Heart left ventricle (tissue), 16 donors: ENCODE measurements at regions of chr6 and their contacts with region 1.

Region 1: DNA sequence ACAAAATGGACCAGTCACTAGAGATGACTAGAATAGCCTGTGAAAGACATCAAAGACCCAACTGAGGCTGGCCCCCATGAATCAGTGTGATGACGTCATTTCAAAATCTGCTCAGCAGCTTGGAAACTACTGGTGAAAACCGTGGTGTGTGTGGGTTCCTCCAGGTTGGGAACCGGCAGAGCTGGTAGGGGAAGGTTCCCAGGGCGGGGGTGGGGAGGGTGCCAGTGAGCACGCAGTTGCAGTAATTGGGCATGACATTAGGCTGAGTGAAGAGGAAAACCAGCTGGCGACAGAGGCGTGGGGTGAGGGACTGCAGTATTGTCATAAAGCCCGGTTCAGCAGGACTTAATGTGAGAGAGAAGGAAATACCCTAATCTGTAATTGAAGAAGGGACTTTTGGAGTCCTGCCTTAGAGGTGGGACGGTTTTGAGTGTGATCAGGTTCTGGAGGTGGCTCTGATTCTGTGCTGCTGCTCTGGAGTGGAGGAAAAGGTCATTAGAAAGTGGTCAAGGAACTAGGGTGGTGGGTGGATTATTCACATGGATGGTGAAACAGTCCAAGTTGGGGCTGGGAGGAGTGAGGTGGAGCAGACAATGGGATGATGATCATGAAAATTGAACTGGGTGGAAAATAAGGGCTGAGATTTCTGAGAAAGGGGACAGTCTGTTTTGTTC is 52.0 kb upstream of the MTHFD1L start:
- DNase-seq: no peak
- ATAC-seq: peak; percentile 11 to 48 (median 32)
- H3K4me3 ChIP-seq: no peak overlapping the region
- H3K27ac ChIP-seq: peak overlapping the region; percentile 4 to 75 (median 60)
- H3K4me1 ChIP-seq: peaks cover 0 to 25% (median 6%) of the 10 kb centered on the region in 12 donors
- H3K27me3 ChIP-seq: no peaks in the 10 kb centered on the region
- CTCF ChIP-seq: no peak
- POLR2A ChIP-seq: no peak

Region 2: DNA sequence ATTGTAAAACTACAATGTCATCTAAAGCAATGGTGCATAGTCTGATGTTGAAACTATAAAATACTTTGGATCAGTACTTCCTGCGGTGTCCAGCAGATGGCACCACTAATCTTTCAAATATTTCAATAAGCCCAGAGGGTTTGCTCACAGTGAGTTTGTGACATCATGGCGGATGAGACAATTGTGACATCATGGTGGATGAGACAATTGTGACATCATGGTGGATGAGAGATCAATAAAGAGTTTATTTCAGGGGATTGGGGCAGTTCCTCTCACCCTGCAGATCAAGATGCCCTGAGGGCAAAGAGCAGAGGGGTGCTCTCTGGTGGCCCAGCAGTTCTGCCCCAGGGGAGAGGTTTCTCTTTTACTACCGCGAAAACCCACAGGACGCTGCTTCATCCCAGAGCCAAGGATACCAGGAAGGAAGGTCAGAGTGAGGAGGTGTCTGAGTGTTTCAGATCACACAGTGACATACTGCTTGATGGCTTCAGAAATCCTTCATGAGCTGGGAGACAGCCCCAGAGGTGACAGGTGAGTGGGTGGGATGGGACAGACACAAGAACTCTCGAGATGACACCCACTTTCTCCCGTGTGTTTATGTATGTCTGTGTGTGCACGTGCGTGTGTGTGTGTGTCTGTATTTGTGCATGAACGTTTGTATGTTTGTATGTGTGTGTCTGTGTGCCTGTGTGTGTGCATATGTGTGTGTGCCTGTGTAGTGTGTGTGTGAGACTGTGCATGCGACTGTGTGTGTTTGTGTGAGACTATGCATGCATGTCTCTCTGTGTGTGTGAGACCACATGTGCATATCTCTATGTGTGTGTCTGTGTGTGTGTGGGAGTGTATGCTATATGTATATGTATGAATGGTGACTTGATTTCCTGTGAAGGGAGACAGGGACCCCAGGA is 879.0 kb before region 1 on chr6:
- intact Hi-C with region 1: loop called in 2 of 10 experiments (anchors 10 kb)
- DNase-seq: peak in 2 of 5 donors; percentile 34 to 44
- ATAC-seq: peak in 3 of 4 donors; percentile 65 to 77 (median 69)
- H3K4me3 ChIP-seq: no peak overlapping the region
- H3K27ac ChIP-seq: no peak overlapping the region
- H3K4me1 ChIP-seq: peaks cover 0 to 13% (median 10%) of the 10 kb centered on the region in 12 donors
- H3K27me3 ChIP-seq: peaks cover 22 to 96% (median 64%) of the 10 kb centered on the region in 9 donors
- CTCF ChIP-seq: peak; percentile 70 to 86 (median 79)
- POLR2A ChIP-seq: no peak

Region 3: GRCh38 chr6:150072201-150072600 is 741.3 kb before region 1 on chr6:
- intact Hi-C with region 1: loop called in 1 of 10 experiments (anchors 10 kb)
- DNase-seq: peak in 3 of 5 donors; percentile 42 to 71 (median 70)
- ATAC-seq: no peak
- H3K4me3 ChIP-seq: no peak overlapping the region
- H3K27ac ChIP-seq: no peak overlapping the region
- H3K4me1 ChIP-seq: peaks cover 0 to 13% (median 4%) of the 10 kb centered on the region in 12 donors
- H3K27me3 ChIP-seq: no peaks in the 10 kb centered on the region
- CTCF ChIP-seq: no peak
- POLR2A ChIP-seq: no peak

Region 4: DNA sequence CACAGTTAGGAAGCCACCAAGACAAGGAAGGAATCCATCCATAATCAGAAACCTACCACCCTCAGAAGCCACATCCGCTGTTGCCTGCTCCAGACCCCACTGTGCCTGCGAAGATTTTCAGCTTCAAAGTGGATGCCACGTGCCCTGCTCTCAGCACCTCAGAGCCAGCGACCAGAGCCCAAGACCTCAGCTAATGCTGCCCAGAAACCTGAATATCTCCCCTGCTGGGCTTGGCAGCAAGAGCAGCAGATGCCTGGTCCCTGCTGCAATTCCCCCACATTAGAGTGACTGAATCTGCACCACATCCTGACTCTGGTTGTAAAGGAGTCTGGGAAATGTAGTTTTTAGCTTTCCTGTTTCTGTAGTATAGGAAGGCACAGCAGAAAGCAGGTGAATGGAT is 733.9 kb before region 1 on chr6:
- intact Hi-C with region 1: loop called in 7 of 10 experiments (anchors 2 to 10 kb)
- DNase-seq: no peak
- ATAC-seq: no peak
- H3K4me3 ChIP-seq: no peak overlapping the region
- H3K27ac ChIP-seq: no peak overlapping the region
- H3K4me1 ChIP-seq: no peaks in the 10 kb centered on the region
- H3K27me3 ChIP-seq: peaks cover 0 to 10% (median 0%) of the 10 kb centered on the region in 9 donors
- CTCF ChIP-seq: no peak
- POLR2A ChIP-seq: no peak

Region 5: DNA sequence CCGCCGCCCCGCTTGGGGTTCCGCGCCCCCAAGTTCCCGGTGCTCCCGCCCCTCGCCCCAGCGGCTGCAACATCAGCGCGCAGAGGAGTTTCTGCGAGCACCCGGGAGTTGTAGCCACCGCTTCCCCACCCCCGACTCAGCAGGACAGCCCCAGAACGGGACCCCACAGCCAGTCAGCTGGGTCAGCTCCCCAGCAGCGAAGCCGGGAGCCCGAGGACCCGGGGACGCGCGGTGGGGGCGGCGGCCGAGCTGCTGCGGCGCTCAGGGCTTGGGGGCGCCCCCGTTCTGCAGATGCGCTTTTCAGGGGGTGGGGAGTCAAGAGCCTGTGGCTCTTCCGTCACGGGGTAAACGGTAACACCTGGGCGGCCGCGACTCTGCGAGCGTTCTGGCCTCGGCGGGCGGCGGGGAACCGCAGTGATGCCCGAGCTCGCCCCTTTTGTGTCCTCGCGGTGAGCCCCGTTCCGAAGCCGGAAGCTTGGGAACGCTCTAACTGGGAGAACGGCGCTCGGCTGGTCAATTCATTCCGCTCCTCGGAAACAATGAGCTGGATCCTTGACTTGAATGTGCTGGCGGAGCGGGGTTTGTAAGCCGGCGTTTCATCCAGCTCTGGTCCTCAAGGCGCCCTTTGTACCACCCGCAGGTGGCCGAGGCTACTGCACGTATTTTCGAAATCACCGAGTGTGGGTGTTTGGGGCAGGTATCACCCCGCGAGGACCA is 213.0 kb before region 1 on chr6:
- intact Hi-C with region 1: loop called in 8 of 10 experiments (anchors 5 to 10 kb)
- DNase-seq: peak; percentile 66 to 75 (median 71)
- ATAC-seq: peak; percentile 48 to 80 (median 76)
- H3K4me3 ChIP-seq: peak overlapping the region; percentile 59 to 91 (median 80)
- H3K27ac ChIP-seq: peak overlapping the region; percentile 78 to 95 (median 89)
- H3K4me1 ChIP-seq: peaks cover 0 to 22% (median 3%) of the 10 kb centered on the region in 12 donors
- H3K27me3 ChIP-seq: peaks cover 0 to 18% (median 2%) of the 10 kb centered on the region in 9 donors
- CTCF ChIP-seq: peak; percentile 20 to 66 (median 45)
- POLR2A ChIP-seq: peak in 1 of 2 donors; percentile 16

Region 6: DNA sequence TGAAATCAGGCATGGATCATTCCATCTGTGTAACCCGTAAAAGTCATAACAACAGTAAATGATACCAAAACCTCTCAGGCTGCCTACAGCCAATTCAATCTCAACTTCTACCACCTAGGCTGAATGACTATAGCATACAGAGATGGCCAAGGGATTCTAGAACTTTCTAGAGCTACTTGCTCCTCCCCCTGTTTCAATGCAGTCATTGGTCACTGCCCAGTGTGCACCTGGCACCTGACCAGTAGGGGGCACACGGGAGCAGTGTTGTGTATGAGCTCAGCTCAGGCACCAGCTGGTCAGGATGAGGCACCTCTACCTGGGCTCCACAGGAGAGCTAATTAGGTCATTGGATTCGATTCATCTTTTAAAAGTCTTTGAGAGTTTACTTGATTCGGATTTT is 127.6 kb before region 1 on chr6:
- intact Hi-C with region 1: loop called in 6 of 10 experiments (anchors 1 to 10 kb)
- DNase-seq: peak in 2 of 5 donors; percentile 29 to 61
- ATAC-seq: no peak
- H3K4me3 ChIP-seq: peak overlapping the region in 3 of 12 donors; percentile 3 to 55 (median 51)
- H3K27ac ChIP-seq: peak overlapping the region in 9 of 12 donors; percentile 50 to 92 (median 86)
- H3K4me1 ChIP-seq: peaks cover 0 to 61% (median 26%) of the 10 kb centered on the region in 12 donors
- H3K27me3 ChIP-seq: no peaks in the 10 kb centered on the region
- CTCF ChIP-seq: peak in 11 of 12 donors; percentile 40 to 66 (median 56)
- POLR2A ChIP-seq: no peak

Region 7: GRCh38 chr6:150876598-150876997 is 63.1 kb after region 1 on chr6:
- intact Hi-C with region 1: loop called in 1 of 10 experiments (anchors 5 kb)
- DNase-seq: peak in 4 of 5 donors; percentile 54 to 82 (median 68)
- ATAC-seq: peak; percentile 86 to 97 (median 96)
- H3K4me3 ChIP-seq: no peak overlapping the region
- H3K27ac ChIP-seq: peak overlapping the region in 5 of 12 donors; percentile 4 to 66 (median 39)
- H3K4me1 ChIP-seq: peaks cover 0 to 17% (median 5%) of the 10 kb centered on the region in 12 donors
- H3K27me3 ChIP-seq: no peaks in the 10 kb centered on the region
- CTCF ChIP-seq: peak in 5 of 12 donors; percentile 24 to 41 (median 39)
- POLR2A ChIP-seq: no peak

Region 8: GRCh38 chr6:150905769-150906506 is 92.5 kb after region 1 on chr6:
- intact Hi-C with region 1: no loop called
- DNase-seq: no peak
- ATAC-seq: no peak
- H3K4me3 ChIP-seq: no peak overlapping the region
- H3K27ac ChIP-seq: peak overlapping the region in 5 of 12 donors; percentile 16 to 49 (median 29)
- H3K4me1 ChIP-seq: peaks cover 0 to 19% (median 6%) of the 10 kb centered on the region in 12 donors
- H3K27me3 ChIP-seq: no peaks in the 10 kb centered on the region
- CTCF ChIP-seq: peak in 3 of 12 donors; percentile 11 to 27 (median 20)
- POLR2A ChIP-seq: no peak